GM12878 (cell line): ENCODE measurements at regions of chr10 and their contacts with region 1.

Region 1: GRCh38 chr10:110918643-110919363 is at the start of gene BBIP1:
- DNase-seq: peak; percentile 99
- ATAC-seq: peak; percentile 86
- H3K4me3 ChIP-seq: peak within 1 kb of the TSS; percentile 71
- H3K27ac ChIP-seq: peak within 1 kb of the TSS; percentile 96
- H3K4me1 ChIP-seq: peaks cover 7% of the 10 kb centered on the region; the same call in 1 of the 2 replicates
- H3K27me3 ChIP-seq: no peaks in the 10 kb centered on the region
- CTCF ChIP-seq: no peak
- EP300 ChIP-seq: no peak; a peak in 1 of 4 replicates
- POLR2A ChIP-seq: peak; percentile 92
- RAD21 ChIP-seq: no peak
- polyA plus RNA-seq, gene BBIP1: 34.7 to 40.8 TPM

Region 2: DNA sequence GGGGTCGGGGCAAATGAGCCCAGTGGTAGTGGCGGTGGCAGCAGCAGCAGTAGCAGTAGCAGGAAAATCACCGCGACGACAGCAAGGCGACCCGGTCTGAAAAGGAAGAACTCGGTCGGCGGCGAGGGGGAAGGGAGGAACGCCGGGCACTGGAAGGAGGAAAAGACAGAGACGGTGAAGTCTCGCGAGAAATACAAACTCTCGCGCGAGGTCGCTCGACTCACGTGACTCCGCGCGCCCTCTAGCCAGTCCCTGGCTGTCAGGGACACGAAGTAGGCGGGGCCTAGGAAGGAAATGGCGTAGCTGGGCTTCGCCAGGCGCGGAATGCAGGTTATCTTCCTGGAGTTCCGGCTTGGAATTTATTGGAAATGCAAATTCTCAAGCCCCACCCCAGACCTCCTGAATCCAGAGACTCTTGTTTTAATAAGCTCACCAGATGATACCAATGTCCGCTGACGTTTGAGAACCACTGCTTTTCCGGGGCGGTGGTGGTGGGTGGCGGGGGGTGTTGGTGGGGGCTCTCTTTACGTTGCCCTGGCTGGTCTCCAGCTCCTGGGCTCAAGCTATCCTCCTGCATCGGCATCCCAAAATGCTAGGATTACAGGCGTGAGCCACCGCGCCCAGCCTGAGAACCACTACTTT is 613.9 kb before region 1 on chr10 and contains the start of gene SMNDC1:
- CTCF ChIA-PET with region 1: no interaction called
- POLR2A ChIA-PET with region 1: no interaction called
- RAD21 ChIA-PET with region 1: interaction called, 6 read pairs
- SMC1A ChIA-PET with region 1: interaction called, 3 read pairs
- in situ Hi-C with region 1: no loop called
- intact Hi-C with region 1: loop called (anchors 10 kb)
- DNase-seq: peak; percentile 89
- ATAC-seq: peak; percentile 91
- H3K4me3 ChIP-seq: peak within 1 kb of the TSS; percentile 81
- H3K27ac ChIP-seq: peak within 1 kb of the TSS; percentile 88
- H3K4me1 ChIP-seq: peaks cover 7% of the 10 kb centered on the region; the same call in 1 of the 2 replicates
- H3K27me3 ChIP-seq: no peaks in the 10 kb centered on the region
- CTCF ChIP-seq: no peak
- EP300 ChIP-seq: no peak
- POLR2A ChIP-seq: peak; percentile 88
- RAD21 ChIP-seq: no peak
- polyA plus RNA-seq, gene SMNDC1: 10.1 to 12.9 TPM

Region 3: GRCh38 chr10:110698782-110699201 is 220.0 kb before region 1 on chr10:
- CTCF ChIA-PET with region 1: no interaction called
- POLR2A ChIA-PET with region 1: no interaction called
- RAD21 ChIA-PET with region 1: no interaction called
- SMC1A ChIA-PET with region 1: no interaction called
- in situ Hi-C with region 1: no loop called
- intact Hi-C with region 1: no loop called
- DNase-seq: no peak
- ATAC-seq: no peak
- H3K4me3 ChIP-seq: no peak overlapping the region
- H3K27ac ChIP-seq: no peak overlapping the region
- H3K4me1 ChIP-seq: peaks cover 7% of the 10 kb centered on the region
- H3K27me3 ChIP-seq: peaks cover 0 to 5% of the 10 kb centered on the region in 2 experiments; a peak in 1 of 4 replicates
- CTCF ChIP-seq: no peak
- EP300 ChIP-seq: no peak
- POLR2A ChIP-seq: no peak
- RAD21 ChIP-seq: no peak

Region 4: GRCh38 chr10:110843031-110843430 is 75.8 kb before region 1 on chr10:
- CTCF ChIA-PET with region 1: no interaction called
- POLR2A ChIA-PET with region 1: interaction called, 8 read pairs
- RAD21 ChIA-PET with region 1: interaction called, 16 read pairs
- SMC1A ChIA-PET with region 1: interaction called, 6 read pairs
- in situ Hi-C with region 1: no loop called
- intact Hi-C with region 1: no loop called
- DNase-seq: peak; percentile 98
- ATAC-seq: peak; percentile 74
- H3K4me3 ChIP-seq: peak overlapping the region; percentile 68
- H3K27ac ChIP-seq: peak overlapping the region; percentile 97
- H3K4me1 ChIP-seq: peaks cover 53% of the 10 kb centered on the region
- H3K27me3 ChIP-seq: no peaks in the 10 kb centered on the region
- CTCF ChIP-seq: no peak
- EP300 ChIP-seq: peak; percentile 53 to 91; a peak in 3 of 4 replicates
- POLR2A ChIP-seq: no peak; the same call in 1 of the 2 replicates
- RAD21 ChIP-seq: peak; percentile 37; the same call in 1 of the 2 replicates

Region 5: DNA sequence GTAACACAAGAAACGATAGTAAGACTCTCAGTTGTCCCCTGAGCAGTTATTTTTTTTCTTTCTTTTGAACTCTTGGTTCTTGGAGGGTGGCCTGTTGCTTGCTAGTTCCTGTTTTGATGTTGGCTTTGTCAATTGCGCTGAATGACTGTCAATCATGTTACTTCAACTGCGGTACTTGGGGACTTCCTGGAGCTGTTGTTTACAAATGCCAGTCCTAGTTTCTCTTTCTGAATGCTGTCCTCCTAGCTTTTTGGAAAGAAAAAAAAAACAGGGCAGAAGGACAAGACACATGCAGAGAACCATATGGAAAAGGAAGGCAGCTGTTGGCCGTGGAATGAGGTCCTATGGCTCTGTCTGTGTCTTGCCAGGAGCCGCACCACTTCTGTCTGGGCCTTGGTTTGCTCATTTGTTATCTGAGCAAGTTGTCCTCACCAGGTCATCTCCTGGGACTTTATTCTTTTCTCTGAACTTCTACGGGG is 54.1 kb before region 1 on chr10:
- CTCF ChIA-PET with region 1: interaction called, 3 read pairs
- POLR2A ChIA-PET with region 1: interaction called, 19 read pairs
- RAD21 ChIA-PET with region 1: interaction called, 8 read pairs
- SMC1A ChIA-PET with region 1: interaction called, 11 read pairs
- in situ Hi-C with region 1: no loop called
- intact Hi-C with region 1: loop called (anchors 2 kb)
- DNase-seq: peak; percentile 97
- ATAC-seq: peak; percentile 61
- H3K4me3 ChIP-seq: peak overlapping the region; percentile 62; the same call in 1 of the 2 replicates
- H3K27ac ChIP-seq: peak overlapping the region; percentile 99
- H3K4me1 ChIP-seq: peaks cover 93% of the 10 kb centered on the region
- H3K27me3 ChIP-seq: no peaks in the 10 kb centered on the region
- CTCF ChIP-seq: no peak
- EP300 ChIP-seq: peak; percentile 16 to 71; a peak in 1 of 4 replicates
- POLR2A ChIP-seq: no peak
- RAD21 ChIP-seq: 0 out of 2 replicates have a peak, but pooled peaks have one; percentile 5

Region 6: DNA sequence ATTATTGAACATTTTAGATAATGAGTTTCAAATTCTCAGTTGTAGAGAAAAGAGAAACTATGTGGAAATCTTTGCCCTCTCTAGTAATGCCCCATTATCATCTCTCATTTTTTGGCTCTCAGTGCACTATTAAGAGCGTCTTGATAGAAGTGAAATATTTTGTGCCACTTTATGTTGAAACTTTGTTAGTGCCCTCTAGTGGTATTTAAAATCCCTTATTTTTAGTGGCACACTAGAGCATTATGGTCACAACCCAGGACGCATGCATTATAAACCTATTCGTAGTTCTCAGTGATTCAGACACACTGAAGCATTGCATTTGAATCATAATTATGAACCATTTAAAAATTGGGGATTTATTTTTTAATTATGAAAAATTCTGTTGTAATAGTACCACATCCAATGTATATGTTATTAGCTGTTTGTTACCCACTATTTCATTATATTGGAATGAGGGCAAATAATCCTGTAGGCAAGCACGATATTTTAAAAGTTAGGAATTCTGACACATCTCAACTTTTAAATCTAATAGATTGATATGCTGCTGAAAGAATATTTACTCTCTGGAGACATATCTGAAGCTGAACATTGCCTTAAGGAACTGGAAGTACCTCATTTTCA is 25.1 kb before region 1 on chr10:
- CTCF ChIA-PET with region 1: interaction called, 16 read pairs
- POLR2A ChIA-PET with region 1: interaction called, 13 read pairs
- RAD21 ChIA-PET with region 1: interaction called, 13 read pairs
- SMC1A ChIA-PET with region 1: interaction called, 28 read pairs
- in situ Hi-C with region 1: no loop called
- intact Hi-C with region 1: no loop called
- DNase-seq: no peak
- ATAC-seq: peak; percentile 93
- H3K4me3 ChIP-seq: no peak overlapping the region
- H3K27ac ChIP-seq: no peak overlapping the region
- H3K4me1 ChIP-seq: no peaks in the 10 kb centered on the region
- H3K27me3 ChIP-seq: no peaks in the 10 kb centered on the region
- CTCF ChIP-seq: peak; percentile 34 to 52 (median 44); a peak in 4 of 6 replicates
- EP300 ChIP-seq: no peak
- POLR2A ChIP-seq: no peak
- RAD21 ChIP-seq: peak; percentile 66

Region 7: DNA sequence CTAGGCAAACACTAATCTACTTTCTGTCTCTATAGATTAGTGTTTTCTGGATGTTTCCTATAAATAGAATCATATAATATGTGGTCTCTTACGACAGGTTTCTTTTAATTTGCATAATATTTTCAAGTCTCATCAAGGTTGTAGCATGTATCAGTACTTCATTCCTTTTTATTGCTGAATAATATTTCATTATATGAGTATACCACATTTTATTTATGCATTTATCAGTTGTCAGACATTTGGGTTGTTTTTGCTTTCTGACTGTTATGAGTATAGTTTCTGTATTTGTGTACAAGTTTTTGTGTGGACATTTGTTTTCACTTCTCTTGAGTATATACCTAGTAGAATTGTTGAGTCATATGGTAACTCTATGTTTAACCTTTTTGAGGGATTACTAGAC is 48.8 kb after region 1 on chr10:
- CTCF ChIA-PET with region 1: no interaction called
- POLR2A ChIA-PET with region 1: interaction called, 3 read pairs
- RAD21 ChIA-PET with region 1: no interaction called
- SMC1A ChIA-PET with region 1: interaction called, 8 read pairs
- in situ Hi-C with region 1: no loop called
- intact Hi-C with region 1: loop called (anchors 2 kb)
- DNase-seq: no peak
- ATAC-seq: peak; percentile 54
- H3K4me3 ChIP-seq: no peak overlapping the region
- H3K27ac ChIP-seq: no peak overlapping the region
- H3K4me1 ChIP-seq: peaks cover 3% of the 10 kb centered on the region; the same call in 1 of the 2 replicates
- H3K27me3 ChIP-seq: no peaks in the 10 kb centered on the region
- CTCF ChIP-seq: no peak
- EP300 ChIP-seq: no peak
- POLR2A ChIP-seq: no peak
- RAD21 ChIP-seq: no peak

Region 8: DNA sequence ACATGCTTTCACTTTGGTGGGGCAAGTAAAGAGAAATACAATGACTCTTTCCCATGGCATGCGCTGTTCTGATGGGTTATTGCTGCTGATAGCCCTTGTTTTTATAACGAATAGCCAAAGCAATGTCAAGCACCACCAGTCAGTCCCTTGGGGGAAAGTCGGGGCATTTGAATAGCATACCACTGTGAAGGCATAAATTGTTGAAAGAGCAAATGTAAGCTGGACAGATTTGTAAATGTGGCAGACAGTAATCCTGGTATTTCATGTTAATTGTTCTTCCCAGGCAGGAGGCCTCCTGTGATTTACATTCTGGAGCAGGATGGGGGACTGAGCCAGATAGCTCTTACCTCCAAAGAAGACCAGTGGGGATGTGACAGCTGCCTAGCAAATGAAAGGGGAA is 451.3 kb after region 1 on chr10:
- CTCF ChIA-PET with region 1: no interaction called
- POLR2A ChIA-PET with region 1: no interaction called
- RAD21 ChIA-PET with region 1: no interaction called
- SMC1A ChIA-PET with region 1: no interaction called
- in situ Hi-C with region 1: no loop called
- intact Hi-C with region 1: no loop called
- DNase-seq: no peak
- ATAC-seq: no peak
- H3K4me3 ChIP-seq: no peak overlapping the region
- H3K27ac ChIP-seq: no peak overlapping the region
- H3K4me1 ChIP-seq: no peaks in the 10 kb centered on the region
- H3K27me3 ChIP-seq: no peaks in the 10 kb centered on the region; a peak in 1 of 4 replicates
- CTCF ChIP-seq: no peak
- EP300 ChIP-seq: no peak
- POLR2A ChIP-seq: no peak
- RAD21 ChIP-seq: no peak

Region 9: GRCh38 chr10:111933917-111934316 is 1015.1 kb after region 1 on chr10:
- CTCF ChIA-PET with region 1: no interaction called
- POLR2A ChIA-PET with region 1: no interaction called
- RAD21 ChIA-PET with region 1: no interaction called
- SMC1A ChIA-PET with region 1: no interaction called
- in situ Hi-C with region 1: no loop called
- intact Hi-C with region 1: no loop called
- DNase-seq: no peak
- ATAC-seq: no peak
- H3K4me3 ChIP-seq: no peak overlapping the region
- H3K27ac ChIP-seq: no peak overlapping the region
- H3K4me1 ChIP-seq: no peaks in the 10 kb centered on the region
- H3K27me3 ChIP-seq: no peaks in the 10 kb centered on the region; a peak in 1 of 4 replicates
- CTCF ChIP-seq: no peak
- EP300 ChIP-seq: no peak
- POLR2A ChIP-seq: no peak
- RAD21 ChIP-seq: no peak